ENCODE measurements at regions of chr3 and their contacts with region 1.

Region 1: DNA sequence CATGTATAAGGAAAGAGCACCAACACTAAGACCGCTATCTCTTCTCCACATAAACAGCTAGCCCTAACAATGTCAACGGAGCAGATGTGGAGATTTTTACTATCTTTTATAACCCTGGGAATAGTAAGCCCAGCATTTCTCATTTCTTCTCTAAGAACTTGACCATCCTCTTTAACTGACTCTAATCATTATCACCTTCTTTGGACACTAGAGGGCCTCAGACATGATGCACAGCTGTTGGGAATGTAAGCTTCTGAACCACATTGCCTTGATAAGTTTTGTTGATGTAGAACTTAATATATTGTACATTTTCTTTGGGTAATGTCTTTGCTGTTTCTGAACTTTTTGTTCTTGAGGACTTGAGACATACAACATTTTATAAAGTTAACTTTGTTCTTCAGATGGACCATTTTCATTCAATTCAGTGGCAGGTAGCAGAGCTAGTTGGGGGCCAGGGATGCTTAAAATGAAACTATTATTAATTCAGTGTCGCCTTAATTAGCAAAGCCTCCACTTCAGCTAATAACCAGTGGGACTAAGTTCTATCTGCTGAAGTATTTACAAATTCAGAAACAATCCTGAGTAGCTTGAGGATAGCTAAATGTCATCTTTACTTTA is 9.6 kb upstream of the TAGLN3 start:
- DNase-seq: no peak
- ATAC-seq: peak; percentile 96
- H3K4me3 ChIP-seq: no peak overlapping the region
- H3K27ac ChIP-seq: no peak overlapping the region
- H3K4me1 ChIP-seq: no peaks in the 10 kb centered on the region
- H3K27me3 ChIP-seq: no peaks in the 10 kb centered on the region
- CTCF ChIP-seq: peak; percentile 57 to 73 (median 68)
- EP300 ChIP-seq: no peak
- POLR2A ChIP-seq: no peak
- RAD21 ChIP-seq: peak; percentile 65

Region 2: DNA sequence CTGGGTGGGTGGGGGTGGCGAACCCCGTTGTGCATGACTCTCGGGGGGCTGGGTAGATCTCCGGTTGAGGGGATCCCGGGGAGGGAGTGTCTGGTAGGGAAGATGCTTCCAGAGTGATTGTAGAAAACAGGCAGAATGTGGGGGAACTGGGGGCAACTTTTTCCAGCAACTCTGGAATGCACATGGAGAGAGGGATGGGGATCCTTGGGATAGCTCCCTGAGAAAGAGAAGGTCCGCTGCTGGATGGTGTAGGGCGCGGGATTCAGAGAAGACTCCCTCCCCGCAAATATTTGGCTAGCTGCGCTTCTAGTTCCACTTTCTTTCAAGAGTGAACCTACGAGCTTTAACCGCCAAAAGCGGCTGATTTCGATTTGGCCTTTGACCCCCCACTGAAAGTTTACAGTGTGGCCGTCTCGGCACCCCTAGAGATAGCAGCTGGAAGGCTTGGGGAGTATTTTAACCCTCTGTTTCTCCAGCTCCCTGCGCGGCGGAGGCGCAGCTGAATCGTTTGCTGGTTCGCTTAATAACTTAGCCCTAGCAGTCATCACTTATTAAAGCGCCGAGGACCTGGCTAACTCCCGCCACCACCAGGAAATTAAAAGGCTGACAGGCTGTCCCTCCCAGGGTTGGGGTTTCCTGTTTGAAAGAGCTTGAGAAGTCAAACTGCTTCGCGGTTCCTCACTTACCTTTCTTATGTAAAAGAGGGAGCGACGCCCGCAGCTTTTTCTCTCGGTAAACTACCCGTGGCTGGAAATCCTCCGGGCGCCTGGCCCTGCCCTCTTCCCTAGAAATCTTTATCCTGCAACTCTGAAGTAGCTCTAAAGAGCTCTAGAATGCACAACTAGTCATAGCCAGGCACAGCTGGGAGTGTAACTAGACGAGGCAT is 129.0 kb before region 1 on chr3:
- CTCF ChIA-PET with region 1: interaction called, 12 read pairs
- POLR2A ChIA-PET with region 1: no interaction called
- RAD21 ChIA-PET with region 1: interaction called, 4 read pairs
- SMC1A ChIA-PET with region 1: interaction called, 9 read pairs
- in situ Hi-C with region 1: no loop called
- intact Hi-C with region 1: no loop called
- DNase-seq: peak; percentile 30
- ATAC-seq: peak; percentile 91
- H3K4me3 ChIP-seq: peak overlapping the region; percentile 64
- H3K27ac ChIP-seq: no peak overlapping the region
- H3K4me1 ChIP-seq: peaks cover 5% of the 10 kb centered on the region
- H3K27me3 ChIP-seq: peaks cover 2 to 13% of the 10 kb centered on the region in 2 experiments
- CTCF ChIP-seq: peak; percentile 21 to 33 (median 33); a peak in 3 of 6 replicates
- EP300 ChIP-seq: no peak
- POLR2A ChIP-seq: no peak
- RAD21 ChIP-seq: peak; percentile 53

Region 3: DNA sequence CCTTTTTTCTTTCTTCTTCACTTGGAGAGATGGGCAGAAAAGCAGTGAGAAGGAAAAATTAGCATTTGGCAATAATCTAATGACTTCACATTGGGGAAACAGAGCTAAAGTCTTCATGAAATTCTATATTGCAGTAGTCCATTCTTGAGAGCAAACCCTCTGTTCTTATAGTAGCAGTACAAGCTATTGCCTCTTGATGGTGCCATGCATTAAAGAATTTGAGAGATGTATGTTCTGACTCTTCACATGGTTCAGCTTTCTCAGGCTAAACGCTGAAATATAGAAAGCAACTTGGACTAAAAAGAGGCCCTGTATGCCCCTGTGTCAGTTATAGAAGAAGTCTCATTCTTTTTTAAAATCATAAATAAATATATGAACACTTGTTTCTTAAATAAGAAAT is 94.1 kb before region 1 on chr3:
- CTCF ChIA-PET with region 1: interaction called, 15 read pairs
- POLR2A ChIA-PET with region 1: no interaction called
- RAD21 ChIA-PET with region 1: interaction called, 4 read pairs
- SMC1A ChIA-PET with region 1: interaction called, 4 read pairs
- in situ Hi-C with region 1: no loop called
- intact Hi-C with region 1: no loop called
- DNase-seq: no peak
- ATAC-seq: peak; percentile 71
- H3K4me3 ChIP-seq: no peak overlapping the region
- H3K27ac ChIP-seq: no peak overlapping the region
- H3K4me1 ChIP-seq: no peaks in the 10 kb centered on the region
- H3K27me3 ChIP-seq: peaks cover 0 to 1% of the 10 kb centered on the region in 2 experiments; a peak in 1 of 4 replicates
- CTCF ChIP-seq: peak; percentile 11 to 37 (median 26); a peak in 2 of 6 replicates
- EP300 ChIP-seq: no peak
- POLR2A ChIP-seq: no peak
- RAD21 ChIP-seq: peak; percentile 36; the same call in 1 of the 2 replicates

Region 4: DNA sequence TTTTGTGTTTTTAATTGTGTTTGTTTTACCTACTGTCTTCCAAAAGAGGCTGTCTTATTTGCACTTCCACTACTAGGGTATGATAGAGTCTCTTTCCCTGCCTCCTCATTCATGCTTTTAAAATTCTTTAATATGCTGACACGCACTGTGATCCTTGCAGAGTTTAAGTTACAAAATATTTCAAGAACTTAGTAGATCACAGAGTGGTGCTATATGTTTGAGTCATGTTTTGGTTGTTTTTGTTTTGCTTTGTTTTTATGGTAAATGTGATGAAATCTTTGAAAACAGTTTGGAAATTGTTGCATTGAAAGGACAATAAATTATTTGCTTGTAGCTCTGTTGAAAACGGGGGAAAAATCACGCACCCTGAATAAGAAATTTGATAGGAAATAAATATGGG is 16.3 kb before region 1 on chr3:
- CTCF ChIA-PET with region 1: interaction called, 80 read pairs
- POLR2A ChIA-PET with region 1: interaction called, 10 read pairs
- RAD21 ChIA-PET with region 1: interaction called, 5 read pairs
- SMC1A ChIA-PET with region 1: interaction called, 44 read pairs
- in situ Hi-C with region 1: no loop called
- intact Hi-C with region 1: no loop called
- DNase-seq: no peak
- ATAC-seq: no peak
- H3K4me3 ChIP-seq: no peak overlapping the region
- H3K27ac ChIP-seq: no peak overlapping the region
- H3K4me1 ChIP-seq: no peaks in the 10 kb centered on the region
- H3K27me3 ChIP-seq: no peaks in the 10 kb centered on the region
- CTCF ChIP-seq: no peak
- EP300 ChIP-seq: no peak
- POLR2A ChIP-seq: no peak
- RAD21 ChIP-seq: no peak

Region 5: DNA sequence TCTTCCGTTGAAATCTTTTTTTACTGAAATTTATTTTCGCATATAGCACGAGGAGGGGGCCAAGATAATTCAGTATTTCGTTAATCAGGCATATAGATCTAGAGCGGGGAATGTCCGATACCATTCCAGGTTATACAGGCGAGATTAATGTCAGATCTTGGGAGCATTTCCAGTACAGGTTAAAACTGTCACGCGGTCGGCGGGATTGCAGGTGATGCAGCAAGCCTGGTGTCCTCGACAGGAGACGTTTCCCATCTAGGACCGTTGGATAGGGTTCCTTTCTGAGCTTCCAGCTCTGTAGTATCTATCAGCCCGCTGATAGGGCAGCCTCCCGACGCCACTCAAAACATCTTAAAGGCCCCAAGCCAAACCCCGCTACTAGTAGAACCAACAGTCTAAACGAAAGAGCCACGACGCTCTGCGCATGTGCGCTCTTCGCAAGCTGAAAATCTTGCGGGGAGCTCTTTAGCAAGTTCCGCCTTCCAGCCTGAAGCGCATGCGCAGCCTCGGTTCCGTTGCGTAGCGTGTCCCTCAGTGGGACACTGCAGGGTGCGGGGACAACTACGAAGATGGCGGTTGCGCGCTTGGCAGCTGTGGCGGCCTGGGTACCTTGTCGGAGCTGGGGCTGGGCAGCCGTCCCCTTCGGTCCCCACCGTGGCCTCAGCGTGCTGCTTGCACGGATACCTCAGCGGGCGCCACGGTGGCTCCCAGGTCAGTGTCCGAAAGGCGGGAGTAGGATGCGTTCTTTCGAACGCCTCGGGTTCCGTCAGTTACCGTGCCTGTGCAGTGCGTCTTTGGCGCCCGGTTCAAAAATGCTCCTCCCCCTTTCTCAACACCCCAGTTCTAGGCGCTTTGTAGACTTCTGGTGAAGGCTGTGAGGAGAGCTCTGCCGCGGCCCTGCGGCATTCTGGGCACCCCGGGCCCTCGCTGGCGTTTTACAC is 10.4 kb before region 1 on chr3 and contains the start of gene ABHD10:
- CTCF ChIA-PET with region 1: interaction called, 80 read pairs
- POLR2A ChIA-PET with region 1: interaction called, 10 read pairs
- RAD21 ChIA-PET with region 1: interaction called, 26 read pairs
- SMC1A ChIA-PET with region 1: interaction called, 44 read pairs
- in situ Hi-C with region 1: no loop called
- intact Hi-C with region 1: no loop called
- DNase-seq: peak; percentile 92
- ATAC-seq: peak; percentile 97
- H3K4me3 ChIP-seq: peak within 1 kb of the TSS; percentile 89
- H3K27ac ChIP-seq: peak within 1 kb of the TSS; percentile 78
- H3K4me1 ChIP-seq: peaks cover 5% of the 10 kb centered on the region
- H3K27me3 ChIP-seq: no peaks in the 10 kb centered on the region
- CTCF ChIP-seq: no peak
- EP300 ChIP-seq: no peak
- POLR2A ChIP-seq: peak; percentile 99
- RAD21 ChIP-seq: no peak
- polyA plus RNA-seq, gene ABHD10: 12.3 to 16.7 TPM

Region 6: GRCh38 chr3:112007633-112008032 is 18.5 kb after region 1 on chr3:
- CTCF ChIA-PET with region 1: interaction called, 467 read pairs
- POLR2A ChIA-PET with region 1: interaction called, 9 read pairs
- RAD21 ChIA-PET with region 1: interaction called, 158 read pairs
- SMC1A ChIA-PET with region 1: interaction called, 417 read pairs
- in situ Hi-C with region 1: no loop called
- intact Hi-C with region 1: no loop called
- DNase-seq: no peak
- ATAC-seq: no peak
- H3K4me3 ChIP-seq: no peak overlapping the region
- H3K27ac ChIP-seq: no peak overlapping the region
- H3K4me1 ChIP-seq: no peaks in the 10 kb centered on the region
- H3K27me3 ChIP-seq: no peaks in the 10 kb centered on the region
- CTCF ChIP-seq: no peak
- EP300 ChIP-seq: no peak
- POLR2A ChIP-seq: no peak
- RAD21 ChIP-seq: no peak

Region 7: GRCh38 chr3:112043603-112044201 is 54.5 kb after region 1 on chr3:
- CTCF ChIA-PET with region 1: interaction called, 99 read pairs
- POLR2A ChIA-PET with region 1: no interaction called
- RAD21 ChIA-PET with region 1: interaction called, 18 read pairs
- SMC1A ChIA-PET with region 1: interaction called, 48 read pairs
- in situ Hi-C with region 1: no loop called
- intact Hi-C with region 1: loop called (anchors 1 kb)
- DNase-seq: peak; percentile 8
- ATAC-seq: peak; percentile 95
- H3K4me3 ChIP-seq: no peak overlapping the region
- H3K27ac ChIP-seq: no peak overlapping the region
- H3K4me1 ChIP-seq: no peaks in the 10 kb centered on the region
- H3K27me3 ChIP-seq: peaks cover 0 to 6% of the 10 kb centered on the region in 2 experiments; a peak in 1 of 4 replicates
- CTCF ChIP-seq: peak; percentile 80 to 92 (median 86)
- EP300 ChIP-seq: no peak
- POLR2A ChIP-seq: no peak
- RAD21 ChIP-seq: peak; percentile 69